ENCODE measurements at regions of chr20 and their contacts with region 1.

Region 1: GRCh38 chr20:19828232-19828631 is 70.2 kb downstream of the RIN2 start:
- DNase-seq: no peak
- H3K4me3 ChIP-seq: no peak overlapping the region
- H3K4me1 ChIP-seq: no peaks in the 10 kb centered on the region
- H3K27me3 ChIP-seq: no peaks in the 10 kb centered on the region

Region 2: GRCh38 chr20:19889011-19889953 is 61.0 kb after region 1 on chr20:
- in situ Hi-C with region 1: loop called (anchors 10 kb)
- DNase-seq: no peak
- H3K4me3 ChIP-seq: no peak overlapping the region
- H3K4me1 ChIP-seq: no peaks in the 10 kb centered on the region
- H3K27me3 ChIP-seq: no peaks in the 10 kb centered on the region